ENCODE measurements at regions of chr5 and their contacts with region 1.

Region 1: GRCh38 chr5:112823623-112824596 is 37.2 kb upstream of the SRP19 start:
- DNase-seq: peak; percentile 71
- ATAC-seq: no peak
- H3K4me3 ChIP-seq: no peak overlapping the region
- H3K27ac ChIP-seq: no peak overlapping the region
- H3K4me1 ChIP-seq: peaks cover 9% of the 10 kb centered on the region
- H3K27me3 ChIP-seq: no peaks in the 10 kb centered on the region
- CTCF ChIP-seq: no peak

Region 2: GRCh38 chr5:112616812-112617547 is 206.9 kb before region 1 on chr5:
- CTCF ChIA-PET with region 1: no interaction called
- POLR2A ChIA-PET with region 1: interaction called, 13 read pairs
- intact Hi-C with region 1: no loop called
- DNase-seq: no peak
- ATAC-seq: no peak
- H3K4me3 ChIP-seq: no peak overlapping the region
- H3K27ac ChIP-seq: no peak overlapping the region
- H3K4me1 ChIP-seq: peaks cover 16% of the 10 kb centered on the region; the same call in 1 of the 2 replicates
- H3K27me3 ChIP-seq: no peaks in the 10 kb centered on the region
- CTCF ChIP-seq: no peak